ENCODE measurements at regions of chr5 and their contacts with region 1.

Region 1: GRCh38 chr5:83076742-83077661 is at the starts of genes TMEM167A and XRCC4:
- DNase-seq: peak; percentile 96
- H3K4me3 Mint-ChIP-seq: peak within 1 kb of the TSS; percentile 99
- H3K27ac Mint-ChIP-seq: peak within 1 kb of the TSS; percentile 98
- H3K4me1 Mint-ChIP-seq: peaks cover 50% of the 10 kb centered on the region
- H3K27me3 Mint-ChIP-seq: no peaks in the 10 kb centered on the region
- total RNA-seq, gene TMEM167A: 73.6 to 78.6 TPM
- total RNA-seq, gene XRCC4: 14.0 to 15.2 TPM

Region 2: DNA sequence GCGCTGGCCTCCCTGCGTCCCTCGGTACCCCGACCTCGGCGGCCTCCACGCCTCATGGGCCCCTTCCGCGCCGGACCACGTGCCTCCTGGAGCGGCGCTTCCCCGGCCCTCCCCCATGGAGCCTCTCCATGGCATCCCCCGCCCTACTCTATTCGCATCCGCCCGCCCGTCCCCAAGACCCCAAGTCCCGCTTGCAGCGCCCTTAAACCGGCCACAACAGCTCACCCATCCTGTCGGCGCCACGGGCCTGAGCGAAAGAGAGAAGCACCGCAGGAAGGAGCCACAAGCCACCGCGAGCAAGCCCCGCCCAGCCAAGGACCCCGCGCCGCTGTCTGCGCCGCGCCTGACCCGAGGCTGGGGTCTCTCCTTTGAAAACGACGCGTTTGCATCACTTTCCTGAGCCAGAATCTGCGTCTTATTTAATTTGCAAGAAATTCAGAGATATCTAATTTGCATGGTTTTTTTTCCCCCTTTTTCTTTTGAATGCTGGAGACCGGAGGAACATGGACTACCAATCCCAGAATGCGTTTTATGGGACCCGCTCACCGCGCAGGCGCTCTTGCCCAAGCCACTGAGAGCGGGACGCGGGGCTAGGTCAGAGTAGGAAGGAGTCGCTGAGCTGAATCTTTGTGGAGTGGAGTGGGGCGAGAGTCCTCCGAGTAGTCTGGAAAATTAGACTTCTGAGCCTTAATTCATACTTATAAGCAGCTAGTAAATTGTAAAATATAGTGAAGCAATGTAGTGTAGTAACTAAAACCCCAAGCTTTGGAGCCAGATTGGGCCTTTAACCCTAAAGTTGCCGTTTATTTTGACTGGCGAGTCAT is 798.7 kb before region 1 on chr5 and contains the start of gene RPS23:
- CTCF ChIA-PET with region 1: no interaction called
- POLR2A ChIA-PET with region 1: interaction called, 4 read pairs
- intact Hi-C with region 1: loop called (anchors 1 kb)
- DNase-seq: peak; percentile 92
- H3K4me3 Mint-ChIP-seq: peak within 1 kb of the TSS; percentile 86
- H3K27ac Mint-ChIP-seq: peak within 1 kb of the TSS; percentile 97
- H3K4me1 Mint-ChIP-seq: peaks cover 50% of the 10 kb centered on the region
- H3K27me3 Mint-ChIP-seq: no peaks in the 10 kb centered on the region
- total RNA-seq, gene RPS23: 2,621 to 2,722 TPM

Region 3: DNA sequence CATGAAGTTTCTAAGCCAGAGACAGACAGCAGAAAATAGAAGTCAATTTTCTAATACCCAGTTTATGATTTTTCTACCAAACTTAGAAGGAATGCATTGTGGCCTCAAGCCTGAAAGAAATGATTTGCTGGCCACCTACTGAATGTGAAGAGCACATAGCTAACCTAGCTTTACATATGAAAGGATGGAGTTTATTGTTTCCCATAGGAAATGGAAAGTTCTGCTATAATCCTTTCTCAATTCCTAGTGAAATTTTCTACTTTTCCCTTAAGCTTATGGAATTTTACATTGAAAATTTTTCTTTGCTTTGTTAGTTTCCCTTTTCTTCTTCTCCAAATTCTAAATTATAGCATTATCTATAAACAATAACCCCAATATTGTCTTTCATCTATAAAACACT is 109.9 kb before region 1 on chr5:
- CTCF ChIA-PET with region 1: no interaction called
- POLR2A ChIA-PET with region 1: no interaction called
- intact Hi-C with region 1: loop called (anchors 1 kb)
- DNase-seq: no peak
- H3K4me3 Mint-ChIP-seq: no peak overlapping the region
- H3K27ac Mint-ChIP-seq: no peak overlapping the region
- H3K4me1 Mint-ChIP-seq: peaks cover 18% of the 10 kb centered on the region
- H3K27me3 Mint-ChIP-seq: no peaks in the 10 kb centered on the region

Region 4: GRCh38 chr5:83095957-83096539 is 19.0 kb after region 1 on chr5:
- CTCF ChIA-PET with region 1: no interaction called
- POLR2A ChIA-PET with region 1: no interaction called
- intact Hi-C with region 1: no loop called
- DNase-seq: no peak
- H3K4me3 Mint-ChIP-seq: no peak overlapping the region
- H3K27ac Mint-ChIP-seq: no peak overlapping the region
- H3K4me1 Mint-ChIP-seq: peaks cover 25% of the 10 kb centered on the region
- H3K27me3 Mint-ChIP-seq: no peaks in the 10 kb centered on the region

Region 5: DNA sequence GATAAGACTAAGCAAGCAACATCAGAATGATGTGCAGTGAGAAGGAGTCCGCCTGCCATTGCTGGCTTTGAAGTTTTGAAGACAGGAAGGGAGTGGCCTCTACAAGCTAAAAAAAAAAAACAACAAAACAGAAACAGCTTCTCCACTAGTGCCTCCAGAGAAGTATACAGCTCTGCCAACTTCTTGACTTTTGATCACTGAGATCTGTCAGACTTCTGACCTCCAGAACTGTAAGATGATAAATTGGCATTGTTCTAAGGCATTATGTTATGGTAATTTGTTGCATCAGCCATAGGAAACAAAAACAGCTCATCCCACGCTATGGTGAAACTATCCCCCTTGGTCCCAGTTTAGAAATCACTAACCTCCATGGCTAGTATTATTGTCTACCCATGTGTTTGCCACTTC is 263.5 kb after region 1 on chr5:
- CTCF ChIA-PET with region 1: no interaction called
- POLR2A ChIA-PET with region 1: no interaction called
- intact Hi-C with region 1: loop called (anchors 10 kb)
- DNase-seq: peak; percentile 10
- H3K4me3 Mint-ChIP-seq: no peak overlapping the region
- H3K27ac Mint-ChIP-seq: peak overlapping the region; percentile 68
- H3K4me1 Mint-ChIP-seq: peaks cover 22% of the 10 kb centered on the region
- H3K27me3 Mint-ChIP-seq: no peaks in the 10 kb centered on the region